CD4-positive, alpha-beta T cell (primary cell): ENCODE measurements at regions of chr7 and their contacts with region 1.

Region 1: DNA sequence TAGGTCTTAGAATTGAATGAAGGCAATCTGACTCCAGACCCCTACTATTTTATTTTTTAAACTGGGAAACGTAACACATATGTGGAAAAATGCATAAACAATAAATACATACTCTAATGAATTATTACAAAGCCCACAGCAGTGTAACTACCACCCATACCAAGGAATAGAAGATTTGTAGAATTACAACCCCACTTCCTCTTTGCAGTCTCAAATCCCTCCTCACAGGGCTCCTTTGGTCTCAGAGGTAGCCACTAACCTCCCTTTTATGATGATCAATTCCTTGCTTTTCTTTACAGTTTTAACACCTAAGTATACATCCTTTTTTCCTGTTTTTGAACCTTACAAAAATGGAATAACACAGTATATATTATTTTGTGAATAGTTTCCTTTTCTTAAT is 6.7 kb upstream of the CCDC126 start:
- DNase-seq: no peak
- ATAC-seq: no peak
- H3K4me3 ChIP-seq: no peak overlapping the region
- H3K4me3 Mint-ChIP-seq: no peak overlapping the region
- H3K27ac ChIP-seq: no peak overlapping the region
- H3K27ac Mint-ChIP-seq: no peak overlapping the region
- H3K4me1 ChIP-seq: no peaks in the 10 kb centered on the region
- H3K4me1 Mint-ChIP-seq: no peaks in the 10 kb centered on the region
- H3K27me3 ChIP-seq: no peaks in the 10 kb centered on the region
- H3K27me3 Mint-ChIP-seq: no peaks in the 10 kb centered on the region
- CTCF ChIP-seq: no peak

Region 2: GRCh38 chr7:23679898-23680413 is 89.4 kb after region 1 on chr7 and contains the start of gene FAM221A:
- CTCF ChIA-PET with region 1: no interaction called
- POLR2A ChIA-PET with region 1: no interaction called
- intact Hi-C with region 1: loop called in 1 of 2 experiments (anchors 2 kb)
- DNase-seq: peak; percentile 60 to 91 (median 77)
- ATAC-seq: peak; percentile 95
- H3K4me3 ChIP-seq: peak within 1 kb of the TSS; percentile 81
- H3K4me3 Mint-ChIP-seq: peak within 1 kb of the TSS; percentile 95
- H3K27ac ChIP-seq: peak within 1 kb of the TSS; percentile 1 to 56
- H3K27ac Mint-ChIP-seq: peak within 1 kb of the TSS; percentile 85
- H3K4me1 ChIP-seq: peaks cover 12% of the 10 kb centered on the region
- H3K4me1 Mint-ChIP-seq: peaks cover 14% of the 10 kb centered on the region
- H3K27me3 ChIP-seq: no peaks in the 10 kb centered on the region
- H3K27me3 Mint-ChIP-seq: peaks cover 7% of the 10 kb centered on the region
- CTCF ChIP-seq: peak; percentile 82
- total RNA-seq, gene FAM221A: 1.8 to 2.8 TPM